CD8-positive, alpha-beta T cell (primary cell): ENCODE measurements at regions of chr7 and their contacts with region 1.

Region 1: DNA sequence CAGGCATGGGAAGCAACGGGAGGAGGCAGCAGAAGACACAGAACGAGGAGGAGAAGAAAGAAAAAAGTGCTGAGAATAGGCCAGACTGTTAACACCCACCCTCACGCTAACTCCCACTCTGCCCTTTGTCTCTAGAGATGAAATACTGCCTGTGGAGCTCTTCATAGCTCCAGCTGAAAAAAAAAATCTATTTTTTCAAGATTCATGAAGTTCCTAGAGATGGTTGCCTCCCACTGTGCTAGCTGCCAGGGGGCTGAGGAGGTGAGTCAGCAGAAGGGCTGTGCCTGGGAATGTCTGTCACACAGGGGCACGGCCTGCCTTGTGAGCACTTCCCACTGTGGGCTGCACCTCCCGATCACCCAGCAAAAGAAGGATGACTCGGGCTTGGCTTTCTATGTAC is 144.5 kb downstream of the RNF216 start:
- DNase-seq: no peak
- ATAC-seq: no peak
- H3K4me3 ChIP-seq: no peak overlapping the region
- H3K4me3 Mint-ChIP-seq: no peak overlapping the region
- H3K27ac ChIP-seq: no peak overlapping the region
- H3K27ac Mint-ChIP-seq: no peak overlapping the region
- H3K4me1 ChIP-seq: peaks cover 15% of the 10 kb centered on the region
- H3K4me1 Mint-ChIP-seq: peaks cover 27% of the 10 kb centered on the region
- H3K27me3 ChIP-seq: no peaks in the 10 kb centered on the region
- H3K27me3 Mint-ChIP-seq: no peaks in the 10 kb centered on the region
- CTCF ChIP-seq: no peak

Region 2: GRCh38 chr7:5657901-5658300 is 21.0 kb after region 1 on chr7:
- CTCF ChIA-PET with region 1: interaction called, 4 read pairs
- POLR2A ChIA-PET with region 1: no interaction called
- intact Hi-C with region 1: loop called in 1 of 2 experiments (anchors 2 kb)
- DNase-seq: no peak
- ATAC-seq: no peak
- H3K4me3 ChIP-seq: no peak overlapping the region
- H3K4me3 Mint-ChIP-seq: no peak overlapping the region
- H3K27ac ChIP-seq: no peak overlapping the region
- H3K27ac Mint-ChIP-seq: no peak overlapping the region
- H3K4me1 ChIP-seq: peaks cover 15% of the 10 kb centered on the region
- H3K4me1 Mint-ChIP-seq: peaks cover 28% of the 10 kb centered on the region
- H3K27me3 ChIP-seq: no peaks in the 10 kb centered on the region
- H3K27me3 Mint-ChIP-seq: no peaks in the 10 kb centered on the region
- CTCF ChIP-seq: no peak

Region 3: DNA sequence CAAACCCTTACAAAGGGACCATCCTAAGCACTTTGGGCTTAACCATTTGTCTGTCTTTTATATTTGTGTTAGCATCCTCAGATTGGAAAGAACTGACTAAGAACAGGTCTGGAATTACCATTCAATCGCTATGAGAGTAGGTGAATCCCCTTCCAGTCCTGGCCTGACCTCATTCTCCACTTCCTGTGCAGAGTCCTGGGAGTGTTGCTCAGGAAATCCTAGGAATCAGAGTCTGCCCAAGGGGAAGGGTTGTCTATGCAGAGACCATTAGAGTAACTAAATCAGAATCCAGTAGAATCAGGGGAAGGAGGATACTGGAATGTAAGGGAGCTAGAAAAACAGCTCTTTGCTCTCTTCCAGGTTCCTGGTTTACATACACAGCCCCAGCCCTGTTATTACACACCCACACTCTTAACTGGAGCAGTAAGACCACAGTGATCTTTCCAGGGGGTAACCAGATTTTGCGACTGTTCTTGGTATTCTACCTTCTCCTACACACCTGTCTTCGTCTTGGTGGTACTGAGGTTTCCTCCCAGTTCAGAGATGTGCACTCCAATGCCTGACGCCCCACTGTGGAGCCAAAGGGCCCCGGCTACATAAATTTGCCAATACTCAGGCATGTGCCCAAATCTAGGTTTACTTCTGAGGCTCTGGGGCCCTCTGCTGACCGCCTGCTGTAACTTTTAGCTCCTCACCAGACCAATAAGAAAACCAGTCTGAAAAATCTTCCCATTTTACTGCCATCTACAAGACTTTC is 40.8 kb after region 1 on chr7:
- CTCF ChIA-PET with region 1: no interaction called
- POLR2A ChIA-PET with region 1: no interaction called
- intact Hi-C with region 1: no loop called
- DNase-seq: peak in 6 of 9 experiments; percentile 17 to 66 (median 48)
- ATAC-seq: peak; percentile 54
- H3K4me3 ChIP-seq: no peak overlapping the region
- H3K4me3 Mint-ChIP-seq: no peak overlapping the region
- H3K27ac ChIP-seq: no peak overlapping the region
- H3K27ac Mint-ChIP-seq: peak overlapping the region; percentile 30
- H3K4me1 ChIP-seq: peaks cover 36% of the 10 kb centered on the region
- H3K4me1 Mint-ChIP-seq: peaks cover 58% of the 10 kb centered on the region
- H3K27me3 ChIP-seq: no peaks in the 10 kb centered on the region
- H3K27me3 Mint-ChIP-seq: no peaks in the 10 kb centered on the region
- CTCF ChIP-seq: peak; percentile 27

Region 4: GRCh38 chr7:5689118-5689517 is 52.2 kb after region 1 on chr7:
- CTCF ChIA-PET with region 1: no interaction called
- POLR2A ChIA-PET with region 1: no interaction called
- intact Hi-C with region 1: loop called in 1 of 2 experiments (anchors 5 kb)
- DNase-seq: peak in 6 of 9 experiments; percentile 26 to 82 (median 58)
- ATAC-seq: peak; percentile 62
- H3K4me3 ChIP-seq: peak overlapping the region in 1 of 2 experiments; percentile 29
- H3K4me3 Mint-ChIP-seq: peak overlapping the region; percentile 73
- H3K27ac ChIP-seq: peak overlapping the region; percentile 42 to 61
- H3K27ac Mint-ChIP-seq: peak overlapping the region; percentile 94
- H3K4me1 ChIP-seq: peaks cover 91% of the 10 kb centered on the region
- H3K4me1 Mint-ChIP-seq: peaks cover 88% of the 10 kb centered on the region
- H3K27me3 ChIP-seq: no peaks in the 10 kb centered on the region
- H3K27me3 Mint-ChIP-seq: no peaks in the 10 kb centered on the region
- CTCF ChIP-seq: no peak